Left colon (tissue), 2 donors: ENCODE measurements at regions of chr4 and their contacts with region 1.

Region 1: DNA sequence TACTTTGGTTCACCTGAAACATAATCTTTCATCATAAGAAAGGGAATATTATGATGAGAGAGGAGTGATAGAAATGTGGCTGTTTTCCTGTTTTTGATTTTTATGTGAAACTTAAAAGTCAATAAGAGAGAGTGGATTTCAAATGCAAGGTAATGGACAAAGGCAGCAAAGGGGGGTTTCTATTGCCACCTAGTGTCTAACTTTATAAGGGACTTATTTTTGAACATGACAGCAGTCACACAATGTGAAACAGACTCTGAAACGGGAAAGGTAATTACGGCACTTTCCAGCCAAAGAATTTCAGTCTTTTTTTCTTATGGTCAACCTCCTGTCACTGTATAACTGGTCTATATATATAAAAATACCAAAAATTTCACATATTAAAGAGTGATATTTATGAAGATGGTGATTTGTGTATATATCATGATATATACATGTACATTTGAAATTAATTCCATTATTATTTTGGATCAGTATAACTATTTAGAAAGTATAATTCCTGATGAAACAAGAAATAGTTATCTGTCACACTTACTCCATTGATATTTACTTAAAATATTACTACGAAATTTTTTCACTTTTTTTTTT is 127.1 kb downstream of the FBXO8 start:
- DNase-seq: no peak
- ATAC-seq: peak; percentile 53

Region 2: DNA sequence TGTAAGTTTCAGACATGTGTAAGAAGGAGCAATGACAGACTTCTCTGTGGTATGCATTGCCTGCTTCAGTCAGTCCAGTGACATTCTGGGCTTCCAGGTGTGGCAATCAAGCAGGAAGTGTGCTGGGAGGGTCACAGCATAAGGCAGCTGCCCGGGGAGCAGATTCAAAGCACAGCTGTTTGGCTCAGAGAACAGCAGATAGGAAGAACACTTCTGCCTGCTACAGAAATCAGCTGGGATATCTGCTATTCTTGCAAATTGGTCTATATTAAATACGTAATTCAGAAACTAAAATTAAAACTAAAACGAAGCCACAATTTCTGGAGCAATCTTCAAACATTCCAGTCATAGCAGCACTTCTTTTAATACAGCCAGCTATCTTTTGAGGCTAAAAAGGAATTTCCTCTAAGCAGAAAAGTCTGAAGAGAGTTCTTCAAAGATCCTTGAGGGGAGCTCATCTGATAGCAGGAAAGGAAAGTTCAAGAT is 1035.2 kb before region 1 on chr4:
- intact Hi-C with region 1: no loop called
- DNase-seq: peak; percentile 48 to 70
- ATAC-seq: peak; percentile 90

Region 3: GRCh38 chr4:173529477-173530325 is 626.6 kb before region 1 on chr4 and contains the start of gene HAND2:
- intact Hi-C with region 1: loop called in 1 of 2 experiments (anchors 10 kb)
- DNase-seq: peak; percentile 46 to 74
- ATAC-seq: peak; percentile 55
- total RNA-seq, gene HAND2: 2.0 to 18.9 TPM